PC-3 (cell line): ENCODE measurements at regions of chr16 and their contacts with region 1.

Region 1: GRCh38 chr16:67349172-67349571 is 22.6 kb downstream of the LRRC36 start:
- DNase-seq: peak; percentile 61
- ATAC-seq: peak; percentile 37; the same call in 1 of the 2 replicates
- H3K4me3 ChIP-seq: no peak overlapping the region
- H3K27ac ChIP-seq: no peak overlapping the region
- H3K4me1 ChIP-seq: peaks cover 25% of the 10 kb centered on the region
- H3K27me3 ChIP-seq: no peaks in the 10 kb centered on the region
- CTCF ChIP-seq: peak; percentile 60

Region 2: DNA sequence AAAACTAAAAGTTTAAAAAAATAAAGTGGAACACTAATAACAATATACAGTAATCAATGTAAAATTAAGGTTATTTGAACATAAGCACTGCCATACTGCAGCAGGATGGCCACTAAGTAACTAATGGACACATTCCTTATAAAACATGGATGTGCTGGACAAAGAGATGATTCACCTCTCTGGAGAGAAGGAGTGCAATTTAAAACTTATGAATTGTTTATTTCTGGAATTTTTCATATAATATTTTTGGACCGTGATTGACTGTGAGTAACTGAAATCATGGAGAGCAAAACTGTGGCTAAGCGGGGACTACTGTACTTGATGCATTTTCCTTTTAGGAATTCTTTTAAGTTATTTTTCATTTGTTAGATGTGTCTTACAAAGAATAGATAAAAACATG is 298.4 kb before region 1 on chr16:
- CTCF ChIA-PET with region 1: no interaction called
- POLR2A ChIA-PET with region 1: interaction called, 16 read pairs
- intact Hi-C with region 1: no loop called
- DNase-seq: no peak
- ATAC-seq: no peak
- H3K4me3 ChIP-seq: no peak overlapping the region
- H3K27ac ChIP-seq: no peak overlapping the region
- H3K4me1 ChIP-seq: peaks cover 5% of the 10 kb centered on the region; the same call in 1 of the 2 replicates
- H3K27me3 ChIP-seq: no peaks in the 10 kb centered on the region
- CTCF ChIP-seq: no peak

Region 3: DNA sequence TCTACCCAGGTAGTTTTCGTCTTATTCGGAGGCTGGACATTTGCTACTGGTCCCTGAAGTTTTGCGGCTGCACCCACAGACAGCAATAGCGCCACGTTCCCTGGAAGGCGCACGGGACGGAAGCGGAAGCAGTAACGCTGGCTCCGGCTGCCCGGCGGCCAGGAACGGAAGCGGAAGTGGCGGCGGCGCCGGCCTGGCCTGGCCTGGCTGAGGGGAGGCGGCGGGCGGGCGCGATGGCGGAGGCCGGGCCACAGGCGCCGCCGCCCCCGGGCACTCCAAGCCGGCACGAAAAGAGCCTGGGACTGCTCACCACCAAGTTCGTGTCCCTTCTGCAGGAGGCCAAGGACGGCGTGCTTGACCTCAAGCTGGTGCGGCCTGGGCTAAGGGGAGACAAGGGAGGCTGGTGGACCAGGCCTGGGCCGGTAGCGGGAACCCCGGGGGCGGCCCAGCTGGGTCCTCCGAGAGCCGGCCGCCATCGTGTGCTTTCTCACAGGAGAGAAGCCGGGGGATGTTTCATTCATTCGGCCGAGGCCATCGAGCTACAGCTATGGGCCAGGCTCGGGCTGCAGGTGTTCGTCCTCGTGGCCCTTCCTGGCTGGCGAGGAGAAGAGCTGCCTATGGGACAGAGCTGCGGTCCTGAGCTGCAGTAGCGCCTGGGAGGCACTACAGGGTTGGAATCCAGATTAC is 157.0 kb before region 1 on chr16 and contains the start of gene E2F4:
- CTCF ChIA-PET with region 1: no interaction called
- POLR2A ChIA-PET with region 1: no interaction called
- intact Hi-C with region 1: no loop called
- DNase-seq: peak; percentile 88
- ATAC-seq: peak; percentile 95
- H3K4me3 ChIP-seq: peak within 1 kb of the TSS; percentile 98
- H3K27ac ChIP-seq: peak within 1 kb of the TSS; percentile 32
- H3K4me1 ChIP-seq: peaks cover 14% of the 10 kb centered on the region
- H3K27me3 ChIP-seq: no peaks in the 10 kb centered on the region
- CTCF ChIP-seq: no peak
- total RNA-seq, gene E2F4: 86.2 and 107 TPM in 2 replicates

Region 4: DNA sequence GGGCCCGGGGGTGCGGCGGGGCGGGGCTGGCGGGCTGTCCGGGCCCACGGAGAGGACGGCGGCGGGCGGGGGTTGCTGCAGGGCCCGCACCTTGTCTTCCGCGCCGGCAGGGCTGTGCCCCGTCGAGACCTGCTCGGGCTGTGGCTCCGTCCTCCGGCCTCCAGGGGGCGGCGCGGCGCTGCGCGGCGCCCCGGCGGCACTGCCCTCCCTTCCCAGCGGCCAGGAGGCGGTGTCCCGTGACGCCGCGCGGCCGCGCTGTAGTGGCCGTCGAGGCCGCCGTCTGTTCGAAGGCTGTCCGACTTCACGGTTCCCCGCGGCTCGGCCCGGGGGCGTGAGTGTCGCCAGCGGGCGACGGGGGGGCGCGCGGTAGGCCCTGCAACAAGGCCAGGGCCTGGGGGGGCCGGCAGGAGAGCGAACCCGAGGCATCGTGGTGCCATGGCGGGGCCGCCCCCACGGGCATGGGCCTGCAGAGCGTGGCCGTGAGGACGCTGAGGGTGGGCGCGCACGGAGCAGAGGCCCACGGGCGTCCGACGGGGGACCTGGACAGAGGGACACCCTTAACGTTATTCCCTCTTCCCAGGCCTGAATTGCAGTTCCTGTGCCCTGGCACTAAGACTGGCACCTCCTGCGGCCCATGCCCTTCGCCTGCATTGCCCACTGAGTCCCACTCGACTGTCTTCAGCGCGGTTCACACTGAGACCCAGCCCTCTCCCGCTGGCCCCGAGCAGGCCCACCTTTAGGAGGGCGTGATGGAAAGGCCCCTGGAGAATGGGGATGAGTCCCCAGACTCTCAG is 69.7 kb before region 1 on chr16 and contains the start of gene PLEKHG4:
- CTCF ChIA-PET with region 1: no interaction called
- POLR2A ChIA-PET with region 1: no interaction called
- intact Hi-C with region 1: loop called (anchors 5 kb)
- DNase-seq: peak; percentile 74
- ATAC-seq: peak; percentile 72
- H3K4me3 ChIP-seq: peak within 1 kb of the TSS; percentile 71
- H3K27ac ChIP-seq: peak within 1 kb of the TSS; percentile 99
- H3K4me1 ChIP-seq: peaks cover 23% of the 10 kb centered on the region
- H3K27me3 ChIP-seq: no peaks in the 10 kb centered on the region
- CTCF ChIP-seq: peak; percentile 54
- total RNA-seq, gene PLEKHG4: 8.9 and 15.6 TPM in 2 replicates

Region 5: DNA sequence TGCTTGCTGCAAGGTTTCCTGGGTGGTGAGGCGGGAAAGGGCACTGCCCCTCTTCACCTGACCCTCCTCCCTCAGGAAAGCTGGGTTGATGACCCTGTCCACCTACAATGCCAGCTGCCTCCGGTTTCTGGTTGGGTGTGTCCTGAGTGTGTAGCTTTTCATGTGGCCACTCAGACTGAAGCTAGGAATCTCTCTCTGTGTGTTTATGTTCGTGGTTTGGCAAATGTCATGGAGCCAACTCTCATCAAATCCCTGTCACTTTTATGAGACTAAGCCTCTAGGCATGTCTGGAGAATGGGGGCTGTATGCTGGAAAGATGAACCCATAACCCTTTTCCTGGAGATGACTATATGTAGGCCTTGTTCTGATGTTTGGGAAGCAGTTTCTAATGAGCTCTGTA is 52.8 kb before region 1 on chr16:
- CTCF ChIA-PET with region 1: no interaction called
- POLR2A ChIA-PET with region 1: no interaction called
- intact Hi-C with region 1: no loop called
- DNase-seq: peak; percentile 64
- ATAC-seq: peak; percentile 87
- H3K4me3 ChIP-seq: no peak overlapping the region
- H3K27ac ChIP-seq: peak overlapping the region; percentile 41
- H3K4me1 ChIP-seq: peaks cover 13% of the 10 kb centered on the region
- H3K27me3 ChIP-seq: no peaks in the 10 kb centered on the region
- CTCF ChIP-seq: no peak

Region 6: DNA sequence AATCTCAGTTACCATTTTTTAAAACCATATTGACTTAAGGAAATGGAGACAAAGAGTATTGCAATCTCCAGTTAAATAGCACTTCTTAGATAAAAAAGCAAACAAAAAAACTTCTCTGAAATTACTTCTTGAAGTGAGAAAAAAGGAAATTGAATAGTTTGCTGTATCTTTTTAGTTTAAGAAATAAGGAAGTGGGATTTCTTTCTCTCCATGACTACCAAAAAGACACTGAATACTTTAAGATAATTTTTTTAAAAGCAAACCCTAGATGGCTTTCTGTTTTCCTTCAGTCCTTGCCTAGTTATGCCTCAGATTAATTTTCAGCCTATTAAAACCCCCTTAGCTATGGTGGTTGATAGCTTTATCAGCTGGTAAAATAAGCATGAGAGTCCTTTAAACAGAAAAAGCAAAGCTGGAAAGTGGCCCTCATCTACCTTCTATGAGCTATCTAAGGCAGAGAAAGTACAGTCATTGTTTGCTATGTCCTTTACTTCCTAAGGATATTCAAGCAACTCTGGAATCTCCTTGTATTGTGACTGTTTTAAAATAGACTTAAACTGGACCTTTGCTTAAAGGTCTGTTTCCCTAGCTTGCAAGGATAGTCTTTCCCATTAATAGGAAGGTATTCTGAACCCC is 15.5 kb after region 1 on chr16:
- CTCF ChIA-PET with region 1: no interaction called
- POLR2A ChIA-PET with region 1: no interaction called
- intact Hi-C with region 1: loop called (anchors 2 kb)
- DNase-seq: no peak
- ATAC-seq: peak; percentile 49; the same call in 1 of the 2 replicates
- H3K4me3 ChIP-seq: no peak overlapping the region
- H3K27ac ChIP-seq: no peak overlapping the region
- H3K4me1 ChIP-seq: no peaks in the 10 kb centered on the region
- H3K27me3 ChIP-seq: no peaks in the 10 kb centered on the region
- CTCF ChIP-seq: no peak

Region 7: GRCh38 chr16:67393035-67393787 is 44.0 kb after region 1 on chr16 and contains the start of gene TPPP3:
- CTCF ChIA-PET with region 1: no interaction called
- POLR2A ChIA-PET with region 1: no interaction called
- intact Hi-C with region 1: loop called (anchors 10 kb)
- DNase-seq: no peak
- ATAC-seq: no peak
- H3K4me3 ChIP-seq: no peak within 1 kb of the TSS
- H3K27ac ChIP-seq: no peak within 1 kb of the TSS
- H3K4me1 ChIP-seq: peaks cover 5% of the 10 kb centered on the region; the same call in 1 of the 2 replicates
- H3K27me3 ChIP-seq: no peaks in the 10 kb centered on the region
- CTCF ChIP-seq: no peak
- total RNA-seq, gene TPPP3: not detected in 2 replicates

Region 8: DNA sequence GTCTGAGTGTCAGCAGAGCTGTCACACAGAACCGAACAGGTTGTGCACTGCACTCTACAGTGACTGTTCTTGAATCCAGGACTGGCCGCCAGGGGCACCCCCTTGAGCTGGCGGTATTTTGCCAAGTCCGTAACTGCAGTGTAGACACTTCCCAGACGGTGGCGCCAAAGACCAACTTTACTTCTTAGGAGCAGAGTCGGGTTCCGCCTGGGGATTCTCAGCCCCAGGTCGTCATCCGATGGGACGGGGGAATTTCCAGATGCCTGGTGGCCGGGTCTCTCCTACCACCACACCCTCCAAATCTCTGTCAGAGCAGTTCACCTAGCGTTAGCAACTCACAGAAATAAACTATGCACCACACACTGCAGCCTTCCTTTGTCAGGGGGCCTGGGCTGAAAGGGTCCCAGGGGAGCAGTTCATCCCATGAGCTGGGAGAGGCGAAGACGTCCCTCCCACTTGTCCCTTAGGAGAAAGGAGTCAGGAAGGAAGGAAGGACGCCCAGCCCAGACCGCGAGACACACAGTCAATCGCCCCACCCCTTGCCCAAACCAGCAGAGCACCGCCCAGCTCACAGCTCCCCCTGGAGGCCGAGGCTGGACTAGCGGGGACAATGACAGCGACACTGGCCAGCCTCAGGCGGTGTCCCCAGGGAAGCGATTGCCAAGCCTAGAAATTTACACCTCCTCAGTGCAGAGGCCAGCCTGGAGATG is 172.1 kb after region 1 on chr16:
- CTCF ChIA-PET with region 1: no interaction called
- POLR2A ChIA-PET with region 1: no interaction called
- intact Hi-C with region 1: no loop called
- DNase-seq: peak; percentile 97
- ATAC-seq: peak; percentile 94
- H3K4me3 ChIP-seq: peak overlapping the region; percentile 73
- H3K27ac ChIP-seq: peak overlapping the region; percentile 75
- H3K4me1 ChIP-seq: peaks cover 7% of the 10 kb centered on the region
- H3K27me3 ChIP-seq: no peaks in the 10 kb centered on the region
- CTCF ChIP-seq: peak; percentile 74